K562 (cell line): ENCODE measurements at regions of chr4 and their contacts with region 1.

Region 1: GRCh38 chr4:81804849-81805248 is 333.1 kb upstream of the RASGEF1B start:
- DNase-seq: no peak
- ATAC-seq: no peak
- H3K4me3 ChIP-seq: no peak overlapping the region
- H3K27ac ChIP-seq: no peak overlapping the region
- H3K4me1 ChIP-seq: peaks cover 21 to 41% of the 10 kb centered on the region in 2 experiments
- H3K27me3 ChIP-seq: no peaks in the 10 kb centered on the region
- CTCF ChIP-seq: no peak
- EP300 ChIP-seq: no peak
- POLR2A ChIP-seq: no peak
- RAD21 ChIP-seq: no peak

Region 2: DNA sequence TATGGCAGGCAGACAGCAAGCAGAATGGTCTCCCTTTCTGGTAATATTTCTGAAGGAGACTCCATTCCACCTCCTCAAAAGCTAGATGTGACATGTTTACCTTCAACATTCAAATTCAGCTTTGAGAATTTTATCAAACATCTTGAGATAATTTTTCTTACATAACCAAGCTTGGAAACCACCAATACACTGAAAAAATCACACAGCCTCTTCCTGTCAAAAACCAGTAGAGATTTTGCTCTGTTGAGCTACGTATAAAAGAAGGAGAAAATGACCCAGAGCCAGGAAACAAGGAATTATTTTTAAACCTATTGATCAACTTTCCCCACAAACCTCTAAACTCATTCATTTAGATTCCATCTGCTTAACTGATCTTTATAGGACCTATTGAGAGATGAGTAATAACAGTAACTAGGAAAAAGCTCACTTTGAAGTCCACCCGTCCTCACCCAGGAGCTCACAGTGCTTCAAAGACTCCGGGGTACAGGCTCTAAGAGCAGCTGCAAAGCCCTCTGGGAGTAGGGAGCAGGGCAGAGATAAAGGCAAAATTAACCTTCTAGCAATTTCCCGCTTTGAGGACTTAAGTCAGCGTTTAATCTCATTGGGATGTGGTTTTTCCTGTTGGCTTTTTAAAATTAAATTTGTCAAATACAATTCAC is 15.0 kb before region 1 on chr4:
- CTCF ChIA-PET with region 1: no interaction called
- POLR2A ChIA-PET with region 1: interaction called, 6 read pairs
- in situ Hi-C with region 1: no loop called
- intact Hi-C with region 1: loop called (anchors 1 kb)
- DNase-seq: peak in 2 of 4 experiments; percentile 40 to 51
- ATAC-seq: peak; percentile 74
- H3K4me3 ChIP-seq: no peak overlapping the region
- H3K27ac ChIP-seq: peak overlapping the region; percentile 5; the same call in 2 of the 3 replicates
- H3K4me1 ChIP-seq: peaks cover 16 to 45% of the 10 kb centered on the region in 2 experiments
- H3K27me3 ChIP-seq: no peaks in the 10 kb centered on the region
- CTCF ChIP-seq: no peak
- EP300 ChIP-seq: no peak
- POLR2A ChIP-seq: no peak
- RAD21 ChIP-seq: no peak

Region 3: DNA sequence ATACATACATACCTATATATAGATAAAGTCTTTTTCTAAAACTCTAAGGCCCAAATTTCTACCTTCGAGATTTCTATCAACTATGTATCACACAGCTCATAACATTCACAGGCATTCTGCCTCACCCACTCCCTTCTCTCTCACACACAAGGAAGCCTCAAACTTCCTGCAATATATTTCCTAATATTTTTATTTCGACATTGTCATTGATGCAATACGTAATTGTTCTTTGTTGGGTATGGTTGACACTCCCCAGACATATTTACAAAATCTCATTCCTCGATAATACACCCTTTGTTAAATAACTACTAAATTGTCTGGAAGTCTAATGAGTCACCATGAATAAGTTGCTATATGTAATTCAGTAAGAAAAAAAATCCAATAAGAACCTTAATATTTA is 425.5 kb after region 1 on chr4:
- CTCF ChIA-PET with region 1: no interaction called
- POLR2A ChIA-PET with region 1: no interaction called
- in situ Hi-C with region 1: no loop called
- intact Hi-C with region 1: no loop called
- DNase-seq: no peak
- ATAC-seq: no peak
- H3K4me3 ChIP-seq: no peak overlapping the region
- H3K27ac ChIP-seq: no peak overlapping the region
- H3K4me1 ChIP-seq: no peaks in the 10 kb centered on the region
- H3K27me3 ChIP-seq: peaks cover 0 to 11% of the 10 kb centered on the region in 2 experiments; a peak in 2 of 5 replicates
- CTCF ChIP-seq: no peak
- EP300 ChIP-seq: no peak
- POLR2A ChIP-seq: no peak
- RAD21 ChIP-seq: no peak